Natural killer cell (primary cell): ENCODE measurements at regions of chr2 and their contacts with region 1.

Region 1: DNA sequence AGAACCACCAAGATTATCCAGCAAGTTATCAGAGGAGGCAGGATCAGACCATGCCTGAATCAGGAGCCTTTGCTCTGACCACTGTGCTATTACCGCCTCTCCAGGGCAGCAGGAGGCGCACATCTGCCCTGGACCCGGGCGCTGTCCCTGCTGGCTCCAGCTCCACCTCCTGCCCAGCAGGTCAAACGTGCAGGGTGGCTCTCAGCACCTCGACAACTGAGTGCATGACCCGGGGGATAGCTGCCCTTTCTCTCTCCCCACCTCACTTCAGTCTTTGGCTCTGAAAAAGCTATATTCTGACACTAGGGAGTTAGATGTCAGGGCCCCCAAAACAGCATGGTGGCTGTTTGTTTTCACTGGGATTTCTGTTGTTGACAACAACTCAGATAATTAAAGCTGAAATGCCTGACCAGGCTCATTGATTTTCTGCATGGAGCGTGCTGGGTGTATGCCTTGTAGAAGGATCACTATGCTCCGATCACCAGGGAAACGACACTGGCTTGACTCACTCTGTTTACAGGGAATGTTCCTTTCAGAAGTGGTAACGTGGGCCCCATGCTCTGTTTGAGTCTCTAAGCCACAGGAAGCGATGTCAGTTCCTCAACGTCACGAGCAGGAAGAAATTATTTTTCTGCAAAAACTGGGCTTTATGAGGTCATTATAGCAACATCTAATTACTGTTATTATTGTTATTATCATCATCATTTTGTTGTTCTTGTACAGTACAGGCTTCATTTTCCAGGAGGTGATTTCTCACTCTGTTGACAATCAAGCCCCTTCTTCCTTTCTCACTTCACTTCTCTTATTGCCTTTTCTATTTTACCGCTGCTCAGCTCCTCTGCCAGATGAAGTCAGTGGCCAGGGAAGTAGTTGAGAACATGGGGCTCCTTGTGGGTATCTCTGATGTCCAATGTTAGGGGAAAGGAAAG is 125.6 kb downstream of the PLB1 start:
- DNase-seq: peak; percentile 53 to 95
- ATAC-seq: peak; percentile 77 to 89 (median 81)
- H3K4me3 ChIP-seq: no peak overlapping the region
- H3K4me3 Mint-ChIP-seq: peak overlapping the region; percentile 78
- H3K27ac ChIP-seq: peak overlapping the region; percentile 92
- H3K27ac Mint-ChIP-seq: peak overlapping the region; percentile 91 to 94
- H3K4me1 ChIP-seq: peaks cover 66% of the 10 kb centered on the region
- H3K4me1 Mint-ChIP-seq: peaks cover 60 to 65% of the 10 kb centered on the region in 2 donors
- H3K27me3 ChIP-seq: no peaks in the 10 kb centered on the region
- H3K27me3 Mint-ChIP-seq: no peaks in the 10 kb centered on the region
- CTCF ChIP-seq: no peak

Region 2: GRCh38 chr2:28594289-28595108 is 26.9 kb before region 1 on chr2:
- intact Hi-C with region 1: loop called (anchors 2 kb)
- DNase-seq: peak; percentile 79 to 93
- ATAC-seq: peak; percentile 87 to 96 (median 90)
- H3K4me3 ChIP-seq: no peak overlapping the region
- H3K4me3 Mint-ChIP-seq: peak overlapping the region; percentile 49
- H3K27ac ChIP-seq: peak overlapping the region; percentile 16
- H3K27ac Mint-ChIP-seq: peak overlapping the region; percentile 80 to 83
- H3K4me1 ChIP-seq: peaks cover 9% of the 10 kb centered on the region
- H3K4me1 Mint-ChIP-seq: peaks cover 11% of the 10 kb centered on the region in 2 donors
- H3K27me3 ChIP-seq: no peaks in the 10 kb centered on the region
- H3K27me3 Mint-ChIP-seq: peaks cover 0 to 12% of the 10 kb centered on the region in 2 donors
- CTCF ChIP-seq: peak; percentile 91

Region 3: GRCh38 chr2:28681158-28681571 is 59.7 kb after region 1 on chr2:
- intact Hi-C with region 1: loop called (anchors 5 kb)
- DNase-seq: peak; percentile 58 to 87
- ATAC-seq: peak; percentile 94 to 98 (median 95)
- H3K4me3 ChIP-seq: no peak overlapping the region
- H3K4me3 Mint-ChIP-seq: no peak overlapping the region
- H3K27ac ChIP-seq: peak overlapping the region; percentile 25
- H3K27ac Mint-ChIP-seq: peak overlapping the region; percentile 87 to 88
- H3K4me1 ChIP-seq: peaks cover 19% of the 10 kb centered on the region
- H3K4me1 Mint-ChIP-seq: peaks cover 13 to 15% of the 10 kb centered on the region in 2 donors
- H3K27me3 ChIP-seq: no peaks in the 10 kb centered on the region
- H3K27me3 Mint-ChIP-seq: no peaks in the 10 kb centered on the region
- CTCF ChIP-seq: no peak